Colonic mucosa (tissue), 4 donors: ENCODE measurements at regions of chr13 and their contacts with region 1.

Region 1: DNA sequence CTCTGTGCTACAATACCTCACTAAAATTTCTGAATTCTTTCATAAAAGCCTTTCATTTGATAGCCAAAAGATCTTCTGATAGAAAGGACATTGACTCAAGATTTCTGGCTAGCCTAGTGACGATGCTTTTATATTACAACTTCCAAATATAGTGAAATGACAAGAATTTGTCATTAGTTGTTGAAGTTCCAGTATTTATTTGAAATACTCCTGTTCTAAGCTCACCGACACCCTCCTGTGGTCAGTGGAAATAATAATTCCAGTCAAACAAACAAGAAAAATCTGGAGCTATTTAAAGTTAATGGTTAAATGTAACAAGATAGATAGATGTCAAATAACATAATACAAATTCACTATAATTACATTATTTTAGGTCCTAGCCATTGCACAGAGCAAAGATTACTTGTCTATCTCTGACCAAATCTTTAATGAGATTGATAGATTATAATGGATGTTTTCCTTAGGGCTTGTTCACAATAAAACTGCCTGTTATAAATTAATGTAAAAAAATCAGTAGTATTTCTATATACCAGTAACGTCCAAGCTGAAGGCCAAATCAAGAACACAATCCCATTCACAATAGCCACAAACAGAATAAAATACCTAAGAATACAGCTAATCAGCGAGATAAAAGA is 195.5 kb downstream of the RGCC start:
- DNase-seq: no peak
- H3K4me3 ChIP-seq: no peak overlapping the region
- H3K27ac ChIP-seq: no peak overlapping the region
- H3K4me1 ChIP-seq: no peaks in the 10 kb centered on the region
- H3K27me3 ChIP-seq: no peaks in the 10 kb centered on the region
- CTCF ChIP-seq: peak; percentile 55

Region 2: GRCh38 chr13:41352935-41353840 is 299.7 kb before region 1 on chr13:
- intact Hi-C with region 1: loop called (anchors 5 kb)
- DNase-seq: peak; percentile 24
- H3K4me3 ChIP-seq: no peak overlapping the region
- H3K27ac ChIP-seq: no peak overlapping the region
- H3K4me1 ChIP-seq: no peaks in the 10 kb centered on the region
- H3K27me3 ChIP-seq: no peaks in the 10 kb centered on the region
- CTCF ChIP-seq: peak; percentile 83

Region 3: DNA sequence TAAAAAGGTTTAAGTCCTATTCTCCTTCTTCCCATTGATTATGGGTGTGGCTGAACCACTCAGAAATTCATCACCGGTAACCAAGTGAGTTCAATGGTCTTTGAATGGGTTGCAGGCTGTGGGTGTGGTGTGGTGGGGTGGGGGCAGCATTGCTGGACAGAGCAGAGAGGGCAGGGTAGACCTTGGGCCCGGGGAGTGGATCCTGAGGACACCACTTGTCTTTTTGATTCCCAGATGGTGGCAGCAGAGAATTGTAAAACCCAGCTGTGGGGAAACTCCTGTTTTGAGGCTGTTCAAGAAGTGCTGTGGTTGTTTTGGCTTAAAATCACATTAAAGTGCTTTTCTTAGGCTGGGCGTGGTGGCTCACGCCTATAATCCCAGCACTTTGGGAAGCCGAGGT is 241.3 kb before region 1 on chr13:
- intact Hi-C with region 1: loop called (anchors 5 kb)
- DNase-seq: no peak
- H3K4me3 ChIP-seq: no peak overlapping the region
- H3K27ac ChIP-seq: no peak overlapping the region
- H3K4me1 ChIP-seq: no peaks in the 10 kb centered on the region
- H3K27me3 ChIP-seq: no peaks in the 10 kb centered on the region
- CTCF ChIP-seq: no peak

Region 4: GRCh38 chr13:41465241-41465847 is 187.5 kb before region 1 on chr13:
- intact Hi-C with region 1: loop called (anchors 10 kb)
- DNase-seq: peak; percentile 33
- H3K4me3 ChIP-seq: no peak overlapping the region
- H3K27ac ChIP-seq: peak overlapping the region; percentile 52
- H3K4me1 ChIP-seq: no peaks in the 10 kb centered on the region
- H3K27me3 ChIP-seq: no peaks in the 10 kb centered on the region
- CTCF ChIP-seq: no peak